Common myeloid progenitor, CD34-positive (primary cell): ENCODE measurements at regions of chr10 and their contacts with region 1.

Region 1: GRCh38 chr10:110556969-110557601 is 10.4 kb upstream of the SMC3 start:
- DNase-seq: peak; percentile 77 to 87 (median 86)
- H3K4me3 ChIP-seq: no peak overlapping the region
- H3K27ac ChIP-seq: no peak overlapping the region
- H3K4me1 ChIP-seq: peaks cover 0 to 6% (median 0%) of the 10 kb centered on the region in 4 experiments
- H3K27me3 ChIP-seq: no peaks in the 10 kb centered on the region

Region 2: GRCh38 chr10:110446954-110447608 is 110.0 kb before region 1 on chr10:
- CTCF ChIA-PET with region 1: no interaction called
- POLR2A ChIA-PET with region 1: no interaction called
- DNase-seq: peak in 2 of 3 donors; percentile 24 to 54
- H3K4me3 ChIP-seq: no peak overlapping the region
- H3K27ac ChIP-seq: no peak overlapping the region
- H3K4me1 ChIP-seq: peaks cover 0 to 25% (median 3%) of the 10 kb centered on the region in 4 experiments
- H3K27me3 ChIP-seq: no peaks in the 10 kb centered on the region

Region 3: GRCh38 chr10:110569120-110569519 is 12.0 kb after region 1 on chr10:
- CTCF ChIA-PET with region 1: interaction called, 14 read pairs
- POLR2A ChIA-PET with region 1: no interaction called
- DNase-seq: no peak
- H3K4me3 ChIP-seq: peak overlapping the region in 3 of 7 experiments; percentile 93 to 96 (median 95)
- H3K27ac ChIP-seq: no peak overlapping the region
- H3K4me1 ChIP-seq: peaks cover 0 to 41% (median 21%) of the 10 kb centered on the region in 4 experiments
- H3K27me3 ChIP-seq: no peaks in the 10 kb centered on the region

Region 4: DNA sequence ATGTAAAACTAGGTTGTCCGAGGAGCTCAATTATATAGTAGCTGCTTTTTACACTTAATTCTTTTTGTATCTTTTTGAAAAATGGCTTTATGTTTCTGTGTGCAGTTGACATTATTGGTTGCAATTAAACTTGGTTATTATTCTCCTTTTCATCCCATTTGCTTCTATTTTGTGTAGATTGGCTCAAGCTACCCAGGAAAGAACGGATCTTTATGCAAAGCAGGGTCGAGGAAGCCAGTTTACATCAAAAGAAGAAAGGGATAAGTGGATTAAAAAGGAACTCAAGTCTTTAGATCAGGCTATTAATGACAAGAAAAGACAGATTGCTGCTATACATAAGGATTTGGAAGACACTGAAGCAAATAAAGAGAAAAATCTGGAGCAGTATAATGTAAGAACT is 26.9 kb after region 1 on chr10:
- CTCF ChIA-PET with region 1: no interaction called
- POLR2A ChIA-PET with region 1: no interaction called
- DNase-seq: no peak
- H3K4me3 ChIP-seq: no peak overlapping the region
- H3K27ac ChIP-seq: no peak overlapping the region
- H3K4me1 ChIP-seq: no peaks in the 10 kb centered on the region
- H3K27me3 ChIP-seq: no peaks in the 10 kb centered on the region